ENCODE measurements at regions of chr14 and their contacts with region 1.

Region 1: GRCh38 chr14:36553656-36554260 is 28.7 kb downstream of the NKX2-8 start:
- DNase-seq: peak; percentile 65

Region 2: DNA sequence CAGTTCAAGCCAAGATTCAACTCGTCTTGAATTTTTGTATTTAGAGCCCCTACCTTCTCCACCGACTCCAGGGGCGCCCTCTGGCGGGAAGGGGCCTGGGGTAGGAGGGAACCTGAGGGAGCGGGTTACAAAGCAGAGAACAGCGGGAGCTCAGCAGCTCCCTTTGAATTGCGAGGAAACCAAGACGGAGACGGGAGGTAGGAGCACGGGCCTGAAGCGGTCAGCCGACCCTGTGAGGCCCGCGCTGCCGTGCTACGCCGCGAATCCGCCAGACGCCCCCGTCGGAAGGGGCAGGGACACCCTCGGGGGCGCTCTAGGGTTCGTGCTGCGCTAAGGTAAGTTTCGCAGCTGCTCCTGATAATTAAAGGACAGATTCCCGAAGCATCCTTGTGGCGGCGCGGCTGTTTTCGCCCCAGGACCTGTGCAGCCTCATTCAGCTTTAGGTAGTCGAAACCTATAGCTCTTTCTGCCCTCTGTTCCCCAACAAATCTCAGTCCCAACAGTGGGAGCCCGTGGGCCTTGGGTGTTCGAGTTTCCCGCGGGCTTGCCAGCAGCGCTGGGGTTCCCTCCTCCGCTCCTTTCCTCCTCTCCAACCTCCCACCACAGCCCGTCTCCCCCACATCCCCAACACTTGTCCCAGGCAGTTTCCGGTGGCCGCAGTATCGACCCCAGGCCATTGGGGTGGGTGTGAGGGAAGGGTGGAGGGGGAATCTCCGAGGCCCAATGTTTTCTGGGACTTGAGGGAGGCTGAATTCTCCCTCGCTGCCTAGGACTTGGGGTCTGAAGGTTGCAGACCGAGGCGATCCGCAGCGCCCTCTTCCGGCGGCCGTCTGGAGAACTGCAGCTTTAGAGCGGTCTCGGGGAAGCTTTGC is 28.6 kb before region 1 on chr14:
- CTCF ChIA-PET with region 1: interaction called, 24 read pairs
- POLR2A ChIA-PET with region 1: no interaction called
- DNase-seq: peak; percentile 81

Region 3: GRCh38 chr14:36579573-36580140 is 25.9 kb after region 1 on chr14:
- CTCF ChIA-PET with region 1: interaction called, 13 read pairs
- POLR2A ChIA-PET with region 1: no interaction called
- DNase-seq: no peak

Region 4: DNA sequence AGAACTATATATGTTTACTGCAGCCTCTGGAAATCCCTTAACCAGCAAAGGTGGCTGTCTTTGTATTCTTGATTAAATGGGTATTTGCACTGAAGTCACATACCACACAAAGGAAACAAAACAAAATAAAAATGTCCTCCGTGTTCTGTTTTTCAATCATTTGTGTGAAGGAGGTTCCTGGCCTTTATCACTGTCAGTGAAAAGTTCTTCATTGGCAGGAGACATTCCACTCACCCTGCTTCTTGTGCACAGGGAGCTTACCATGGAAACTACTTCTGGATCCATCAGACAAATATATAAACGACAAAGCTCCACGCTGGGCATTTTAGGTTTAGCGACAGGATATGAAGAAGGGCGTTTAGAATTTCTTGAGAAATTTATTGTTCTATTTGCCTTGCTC is 34.4 kb after region 1 on chr14:
- CTCF ChIA-PET with region 1: interaction called, 13 read pairs
- POLR2A ChIA-PET with region 1: interaction called, 3 read pairs
- DNase-seq: no peak

Region 5: DNA sequence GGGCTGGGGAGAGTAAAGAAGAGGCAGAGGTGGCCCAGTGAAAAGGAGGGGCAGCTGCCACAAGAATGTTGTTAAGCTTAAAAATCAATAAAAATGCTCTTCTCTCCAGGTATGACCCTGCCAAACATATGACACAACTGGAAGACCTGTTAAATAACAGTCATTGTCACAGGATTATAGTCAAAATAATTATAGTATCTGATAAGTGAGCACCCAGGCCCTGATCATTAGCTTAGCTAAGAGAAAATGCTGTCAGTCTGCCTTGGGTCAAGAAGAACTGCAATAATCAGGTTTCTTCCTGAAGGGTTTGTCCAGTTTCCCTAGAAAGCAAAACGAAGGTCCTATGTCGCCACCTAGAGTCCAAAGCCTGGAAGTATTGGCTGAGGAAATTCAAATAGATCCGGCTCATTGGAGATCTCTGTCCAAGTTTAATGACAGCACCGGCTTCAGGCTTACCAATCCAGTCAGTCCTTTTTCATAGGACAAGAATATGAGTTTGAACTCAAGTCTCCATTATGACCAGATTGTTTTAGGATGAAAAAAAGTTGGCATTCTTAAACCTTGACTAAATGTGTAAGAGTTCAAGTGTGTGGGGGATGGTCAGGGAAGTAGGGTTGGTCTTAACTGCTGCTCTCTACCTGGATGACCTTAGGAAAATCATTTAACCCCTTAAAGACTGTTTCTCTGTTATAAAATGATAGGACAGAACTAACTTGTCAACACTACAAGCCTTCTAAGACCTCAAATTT is 51.2 kb after region 1 on chr14:
- CTCF ChIA-PET with region 1: interaction called, 39 read pairs
- POLR2A ChIA-PET with region 1: interaction called, 3 read pairs
- DNase-seq: peak; percentile 77

Region 6: GRCh38 chr14:37150414-37150813 is 596.7 kb after region 1 on chr14:
- CTCF ChIA-PET with region 1: interaction called, 10 read pairs
- POLR2A ChIA-PET with region 1: no interaction called
- DNase-seq: peak; percentile 37

Measured in HEK293T (cell line).